CD8-positive, alpha-beta memory T cell (primary cell): ENCODE measurements at regions of chr12 and their contacts with region 1.

Region 1: DNA sequence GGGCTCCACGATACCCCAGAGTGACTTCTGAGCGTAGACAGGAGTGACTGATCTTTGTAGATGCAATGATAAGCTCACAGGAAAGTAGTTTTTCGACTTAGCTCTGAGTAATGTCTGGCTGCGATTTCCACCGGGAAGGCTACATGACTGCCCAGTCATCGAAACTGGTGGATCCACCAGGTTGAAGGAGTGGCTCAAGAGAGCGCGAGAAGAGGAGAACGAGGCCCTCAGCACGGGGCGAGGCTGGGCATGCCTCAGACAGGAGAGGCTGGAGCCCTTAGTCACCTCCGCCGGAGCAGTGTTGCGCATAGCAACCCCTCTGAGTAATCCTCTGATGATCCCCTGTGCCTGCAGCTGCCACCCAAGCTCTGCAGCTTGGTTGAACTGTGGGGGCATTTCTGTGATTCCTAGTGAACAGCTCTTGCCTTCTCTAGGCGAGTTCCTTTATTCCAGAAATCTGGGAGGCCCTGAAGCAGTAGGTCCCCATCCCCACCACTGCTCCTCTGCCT is 25.6 kb downstream of the ELK3 start:
- DNase-seq: no peak
- H3K4me3 ChIP-seq: no peak overlapping the region
- H3K4me3 Mint-ChIP-seq: peak overlapping the region in 1 of 7 donors; percentile 23
- H3K27ac ChIP-seq: no peak overlapping the region
- H3K27ac Mint-ChIP-seq: peak overlapping the region in 6 of 8 donors; percentile 8 to 84 (median 66)
- H3K4me1 ChIP-seq: peaks cover 7% of the 10 kb centered on the region
- H3K4me1 Mint-ChIP-seq: peaks cover 21 to 58% (median 44%) of the 10 kb centered on the region in 3 donors
- H3K27me3 ChIP-seq: no peaks in the 10 kb centered on the region
- H3K27me3 Mint-ChIP-seq: no peaks in the 10 kb centered on the region

Region 2: DNA sequence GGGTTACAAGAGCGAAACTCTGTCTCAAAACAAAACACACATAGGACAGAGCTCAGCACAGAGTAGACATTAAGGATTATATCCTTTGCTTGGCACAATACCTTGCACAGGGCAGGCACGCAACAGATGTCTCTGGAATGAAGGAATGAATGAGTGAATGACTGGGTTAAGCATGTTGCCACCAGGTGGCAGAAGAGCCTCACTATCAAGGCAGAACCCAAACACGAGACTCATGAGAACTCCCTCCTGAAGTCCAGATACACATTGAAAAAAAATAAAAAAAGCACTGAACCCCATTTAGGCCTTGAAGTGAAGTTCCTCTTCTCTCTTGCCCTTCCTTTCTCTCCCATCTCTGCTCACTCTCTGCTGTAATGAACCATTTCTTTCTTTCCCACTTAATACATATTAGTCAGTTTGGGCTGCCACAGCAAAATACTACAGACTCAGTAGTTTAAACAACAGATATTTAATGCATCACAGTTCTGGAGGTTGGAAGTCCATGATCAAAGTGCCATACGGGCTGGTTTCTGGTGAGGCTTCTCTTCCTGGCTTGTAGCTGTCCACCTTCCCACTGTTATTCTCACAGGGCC is 157.8 kb before region 1 on chr12:
- CTCF ChIA-PET with region 1: interaction called, 88 read pairs
- POLR2A ChIA-PET with region 1: no interaction called
- DNase-seq: peak; percentile 54 to 77 (median 67)
- H3K4me3 ChIP-seq: no peak overlapping the region
- H3K4me3 Mint-ChIP-seq: no peak overlapping the region
- H3K27ac ChIP-seq: no peak overlapping the region
- H3K27ac Mint-ChIP-seq: peak overlapping the region in 4 of 8 donors; percentile 0 to 86 (median 0)
- H3K4me1 ChIP-seq: peaks cover 14% of the 10 kb centered on the region
- H3K4me1 Mint-ChIP-seq: peaks cover 15 to 29% (median 16%) of the 10 kb centered on the region in 3 donors
- H3K27me3 ChIP-seq: no peaks in the 10 kb centered on the region
- H3K27me3 Mint-ChIP-seq: peaks cover 2 to 3% of the 10 kb centered on the region in 2 donors

Region 3: DNA sequence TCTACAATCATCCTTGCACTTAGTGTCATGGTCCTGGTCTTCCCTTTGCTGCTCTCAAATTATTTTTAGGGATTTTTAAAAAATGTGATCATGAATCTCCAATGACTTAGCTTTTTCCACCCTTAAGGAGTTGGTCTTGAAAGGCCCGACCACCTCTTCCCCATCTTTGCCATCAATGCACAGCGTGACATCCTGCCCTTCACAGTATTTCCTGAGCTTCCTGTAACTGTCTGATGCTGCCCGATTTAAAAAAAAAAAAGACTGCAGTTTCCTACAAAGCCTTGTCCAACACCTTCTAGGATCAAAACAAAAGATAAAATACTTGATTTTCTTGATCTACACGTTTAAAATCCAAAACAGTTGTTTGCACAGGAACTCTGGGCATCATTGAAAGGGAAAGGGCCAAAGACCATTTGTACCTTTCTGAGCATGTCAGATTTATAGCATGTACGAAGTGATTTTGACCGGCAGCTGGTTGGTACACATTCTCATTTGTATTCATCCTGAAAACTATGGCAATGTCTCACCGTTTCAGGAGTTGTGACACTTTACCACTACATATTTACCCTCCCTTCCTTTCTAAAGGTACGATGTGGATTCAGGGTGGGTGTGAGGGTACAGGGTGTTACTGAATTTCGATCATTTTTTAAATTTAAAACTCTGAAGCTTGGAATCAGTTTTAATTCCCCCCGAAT is 33.0 kb before region 1 on chr12:
- CTCF ChIA-PET with region 1: interaction called, 12 read pairs
- POLR2A ChIA-PET with region 1: interaction called, 6 read pairs
- DNase-seq: no peak
- H3K4me3 ChIP-seq: no peak overlapping the region
- H3K4me3 Mint-ChIP-seq: no peak overlapping the region
- H3K27ac ChIP-seq: no peak overlapping the region
- H3K27ac Mint-ChIP-seq: peak overlapping the region in 6 of 8 donors; percentile 0 to 88 (median 28)
- H3K4me1 ChIP-seq: peaks cover 9% of the 10 kb centered on the region
- H3K4me1 Mint-ChIP-seq: peaks cover 13 to 30% (median 22%) of the 10 kb centered on the region in 3 donors
- H3K27me3 ChIP-seq: no peaks in the 10 kb centered on the region
- H3K27me3 Mint-ChIP-seq: peaks cover 0 to 1% of the 10 kb centered on the region in 2 donors

Region 4: DNA sequence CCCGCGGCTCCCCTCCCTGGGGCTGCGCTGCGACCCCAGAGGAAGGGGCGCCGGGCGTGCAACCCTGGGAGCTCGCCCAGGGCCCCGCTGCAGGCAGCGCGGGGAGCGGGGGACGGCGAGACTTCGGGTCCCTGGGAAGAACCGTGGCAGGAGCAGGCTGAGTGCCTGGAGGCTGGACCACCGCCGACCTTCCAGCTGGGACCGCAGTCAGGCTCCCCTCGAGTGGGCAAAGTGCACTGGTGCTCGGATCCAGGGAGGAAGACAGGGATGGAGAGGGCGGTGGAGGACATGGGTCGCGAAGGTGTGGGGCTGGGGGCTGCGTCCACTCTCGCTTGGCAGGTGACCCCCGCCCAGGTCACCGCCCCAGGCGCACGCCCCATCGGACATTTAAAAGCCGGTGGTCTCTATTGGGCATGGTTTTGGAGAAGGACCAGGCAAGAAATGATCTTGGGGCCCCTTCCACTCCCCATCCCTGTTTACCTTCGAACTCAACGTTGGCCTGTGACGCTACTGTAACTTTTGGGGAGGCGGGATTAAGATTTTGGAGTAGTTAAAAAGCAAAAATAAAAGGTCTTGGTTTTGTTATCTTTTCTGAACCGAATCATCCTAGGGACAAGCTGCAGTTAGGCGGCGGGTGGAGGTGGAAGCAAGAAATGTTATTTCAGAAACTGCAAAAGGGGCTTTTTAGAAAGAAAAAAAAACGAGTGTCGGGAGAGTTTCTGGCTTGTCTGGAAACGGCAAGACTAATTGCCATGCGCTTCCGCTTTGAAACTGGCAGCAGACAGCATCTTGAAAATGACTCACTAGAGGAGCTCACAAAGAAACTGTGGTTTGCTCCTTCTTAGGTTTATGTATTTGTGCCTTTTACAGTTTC is 24.5 kb before region 1 on chr12:
- CTCF ChIA-PET with region 1: interaction called, 13 read pairs
- POLR2A ChIA-PET with region 1: interaction called, 6 read pairs
- DNase-seq: peak; percentile 61 to 85 (median 75)
- H3K4me3 ChIP-seq: peak overlapping the region; percentile 97
- H3K4me3 Mint-ChIP-seq: peak overlapping the region; percentile 88 to 99 (median 98)
- H3K27ac ChIP-seq: peak overlapping the region; percentile 86
- H3K27ac Mint-ChIP-seq: peak overlapping the region; percentile 90 to 100 (median 98)
- H3K4me1 ChIP-seq: peaks cover 34% of the 10 kb centered on the region
- H3K4me1 Mint-ChIP-seq: peaks cover 43 to 64% (median 45%) of the 10 kb centered on the region in 3 donors
- H3K27me3 ChIP-seq: no peaks in the 10 kb centered on the region
- H3K27me3 Mint-ChIP-seq: peaks cover 0 to 3% of the 10 kb centered on the region in 2 donors

Region 5: DNA sequence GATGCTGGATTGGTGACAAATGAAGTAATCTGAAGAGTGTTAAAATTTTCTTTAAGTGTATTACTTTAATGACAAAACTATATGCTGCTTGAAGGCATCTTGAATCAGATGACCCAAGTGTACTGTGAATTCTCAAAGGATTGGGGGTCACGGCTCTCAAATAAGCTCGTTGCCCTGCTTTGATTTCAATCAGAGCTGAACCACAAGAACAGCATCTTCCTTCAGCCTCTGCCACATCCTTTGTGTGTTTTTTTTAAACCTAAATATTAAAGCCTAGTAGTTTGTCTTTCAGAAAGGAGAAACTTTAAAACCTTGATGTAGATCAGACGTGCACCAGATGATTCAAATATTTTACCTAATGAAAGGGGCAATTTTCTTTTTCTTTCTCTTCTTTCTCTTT is 13.8 kb before region 1 on chr12:
- CTCF ChIA-PET with region 1: interaction called, 11 read pairs
- POLR2A ChIA-PET with region 1: no interaction called
- DNase-seq: peak in 2 of 5 donors; percentile 37 to 56
- H3K4me3 ChIP-seq: no peak overlapping the region
- H3K4me3 Mint-ChIP-seq: peak overlapping the region; percentile 13 to 80 (median 71)
- H3K27ac ChIP-seq: no peak overlapping the region
- H3K27ac Mint-ChIP-seq: peak overlapping the region; percentile 16 to 91 (median 82)
- H3K4me1 ChIP-seq: peaks cover 59% of the 10 kb centered on the region
- H3K4me1 Mint-ChIP-seq: peaks cover 76 to 86% (median 82%) of the 10 kb centered on the region in 3 donors
- H3K27me3 ChIP-seq: no peaks in the 10 kb centered on the region
- H3K27me3 Mint-ChIP-seq: no peaks in the 10 kb centered on the region

Region 6: DNA sequence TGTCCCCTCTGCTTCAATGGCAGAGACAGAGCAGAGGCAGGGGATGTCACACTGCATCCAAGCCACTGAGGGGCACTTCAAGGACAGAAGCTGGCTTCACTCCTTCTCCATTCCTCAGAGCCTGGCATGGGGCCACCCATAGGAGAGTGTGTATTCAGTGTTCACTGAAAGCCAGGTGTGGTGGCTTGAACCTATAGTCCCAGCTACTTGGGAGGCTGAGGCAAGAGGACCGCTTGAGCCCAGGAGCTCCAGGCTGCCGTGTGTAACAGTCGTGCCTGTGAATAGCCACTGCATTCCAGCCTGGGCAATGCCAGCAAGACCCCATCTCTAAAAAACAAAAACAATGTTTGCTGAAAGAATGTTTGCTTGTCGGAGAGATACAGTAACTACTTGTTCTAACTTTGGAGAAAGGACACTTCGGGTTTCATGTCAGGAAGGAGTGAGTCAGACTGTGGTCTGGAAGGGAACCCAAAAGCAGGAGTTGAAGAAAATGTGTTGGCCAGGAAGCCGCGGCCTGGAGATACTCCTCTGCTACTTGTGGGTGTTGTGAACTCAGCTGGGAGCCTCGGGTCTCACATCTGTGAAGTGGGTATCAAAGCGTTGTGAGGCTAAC is 17.8 kb after region 1 on chr12:
- CTCF ChIA-PET with region 1: interaction called, 15 read pairs
- POLR2A ChIA-PET with region 1: no interaction called
- DNase-seq: peak in 4 of 5 donors; percentile 52 to 75 (median 62)
- H3K4me3 ChIP-seq: no peak overlapping the region
- H3K4me3 Mint-ChIP-seq: peak overlapping the region; percentile 35 to 84 (median 70)
- H3K27ac ChIP-seq: peak overlapping the region; percentile 20
- H3K27ac Mint-ChIP-seq: peak overlapping the region; percentile 78 to 97 (median 96)
- H3K4me1 ChIP-seq: peaks cover 58% of the 10 kb centered on the region
- H3K4me1 Mint-ChIP-seq: peaks cover 73 to 95% (median 79%) of the 10 kb centered on the region in 3 donors
- H3K27me3 ChIP-seq: no peaks in the 10 kb centered on the region
- H3K27me3 Mint-ChIP-seq: no peaks in the 10 kb centered on the region

Region 7: GRCh38 chr12:96516472-96517430 is 297.0 kb after region 1 on chr12:
- CTCF ChIA-PET with region 1: interaction called, 43 read pairs
- POLR2A ChIA-PET with region 1: interaction called, 3 read pairs
- DNase-seq: peak; percentile 72 to 89 (median 77)
- H3K4me3 ChIP-seq: no peak overlapping the region
- H3K4me3 Mint-ChIP-seq: peak overlapping the region in 4 of 7 donors; percentile 39 to 69 (median 57)
- H3K27ac ChIP-seq: no peak overlapping the region
- H3K27ac Mint-ChIP-seq: peak overlapping the region; percentile 26 to 88 (median 68)
- H3K4me1 ChIP-seq: peaks cover 5% of the 10 kb centered on the region
- H3K4me1 Mint-ChIP-seq: peaks cover 5 to 7% (median 6%) of the 10 kb centered on the region in 3 donors
- H3K27me3 ChIP-seq: no peaks in the 10 kb centered on the region
- H3K27me3 Mint-ChIP-seq: no peaks in the 10 kb centered on the region